ENCODE measurements at regions of chr16 and their contacts with region 1.

Region 1: GRCh38 chr16:2980227-2981086 is at the start of gene PKMYT1:
- DNase-seq: peak; percentile 56
- ATAC-seq: peak; percentile 80
- H3K4me3 ChIP-seq: peak within 1 kb of the TSS; percentile 89 to 99
- H3K27ac ChIP-seq: peak within 1 kb of the TSS; percentile 93
- H3K4me1 ChIP-seq: peaks cover 24 to 44% of the 10 kb centered on the region in 2 experiments
- H3K27me3 ChIP-seq: no peaks in the 10 kb centered on the region
- CTCF ChIP-seq: no peak
- POLR2A ChIP-seq: peak; percentile 95
- RAD21 ChIP-seq: no peak
- total RNA-seq, gene PKMYT1: 104 TPM

Region 2: DNA sequence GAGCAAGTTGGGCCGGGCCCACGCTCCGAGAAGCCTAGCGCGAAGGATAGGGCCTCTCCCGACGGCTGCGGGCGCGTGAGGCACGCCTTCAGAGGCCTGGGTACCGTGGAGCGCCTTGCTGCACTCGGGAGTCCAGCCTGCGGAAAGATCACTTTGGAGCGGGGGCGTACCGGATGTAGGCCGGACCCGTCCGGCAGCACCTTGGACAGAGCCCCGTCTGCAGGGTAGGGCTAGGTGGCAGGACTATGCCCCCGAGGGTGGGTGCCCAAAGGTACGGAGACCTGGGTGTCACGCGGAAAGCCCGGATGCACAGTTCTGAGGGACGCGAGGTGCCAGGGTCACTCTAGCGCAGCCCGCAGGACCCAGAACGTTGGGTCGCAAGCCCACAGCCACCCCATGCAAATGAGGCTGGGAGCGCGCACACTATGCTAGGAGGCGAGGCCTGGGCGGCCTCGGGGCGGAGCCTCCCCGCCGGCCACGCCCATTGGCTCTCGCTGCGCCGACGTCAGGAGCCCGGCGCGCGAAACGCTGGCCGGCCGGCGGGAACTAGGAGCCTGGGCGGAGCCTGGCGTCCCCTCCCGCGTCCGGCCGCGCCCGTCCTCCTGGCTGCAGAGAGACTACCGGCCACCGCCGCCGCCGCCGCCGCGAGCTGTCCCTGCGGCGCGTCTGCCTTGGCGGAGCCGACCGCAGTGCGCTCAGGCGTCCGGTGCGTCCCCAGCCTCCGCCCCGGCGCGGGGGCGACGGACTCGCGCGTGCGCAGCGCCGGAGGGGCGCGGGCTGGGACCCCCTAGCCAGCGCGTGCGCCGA is 11.5 kb before region 1 on chr16 and contains the start of gene PAQR4:
- CTCF ChIA-PET with region 1: interaction called, 5 read pairs
- POLR2A ChIA-PET with region 1: interaction called, 10 read pairs
- RAD21 ChIA-PET with region 1: no interaction called
- intact Hi-C with region 1: no loop called
- DNase-seq: peak; percentile 82
- ATAC-seq: peak; percentile 67
- H3K4me3 ChIP-seq: peak within 1 kb of the TSS; percentile 66 to 79
- H3K27ac ChIP-seq: peak within 1 kb of the TSS; percentile 95
- H3K4me1 ChIP-seq: peaks cover 19 to 56% of the 10 kb centered on the region in 2 experiments
- H3K27me3 ChIP-seq: no peaks in the 10 kb centered on the region
- CTCF ChIP-seq: no peak
- POLR2A ChIP-seq: peak; percentile 25
- RAD21 ChIP-seq: no peak
- total RNA-seq, gene PAQR4: 45.6 TPM

Region 3: GRCh38 chr16:3292604-3293003 is 312.1 kb after region 1 on chr16:
- CTCF ChIA-PET with region 1: no interaction called
- POLR2A ChIA-PET with region 1: no interaction called
- RAD21 ChIA-PET with region 1: no interaction called
- intact Hi-C with region 1: no loop called
- DNase-seq: no peak
- ATAC-seq: no peak; the same call in 1 of the 2 replicates
- H3K4me3 ChIP-seq: no peak overlapping the region
- H3K27ac ChIP-seq: no peak overlapping the region
- H3K4me1 ChIP-seq: no peaks in the 10 kb centered on the region
- H3K27me3 ChIP-seq: no peaks in the 10 kb centered on the region
- CTCF ChIP-seq: no peak
- POLR2A ChIP-seq: no peak
- RAD21 ChIP-seq: no peak

Measured in HCT116 (cell line).